ENCODE measurements at regions of chr9 and their contacts with region 1.

Region 1: GRCh38 chr9:94014065-94014654 is 59.0 kb upstream of the BARX1 start:
- DNase-seq: no peak
- H3K4me3 ChIP-seq: no peak overlapping the region
- CTCF ChIP-seq: peak; percentile 46

Region 2: DNA sequence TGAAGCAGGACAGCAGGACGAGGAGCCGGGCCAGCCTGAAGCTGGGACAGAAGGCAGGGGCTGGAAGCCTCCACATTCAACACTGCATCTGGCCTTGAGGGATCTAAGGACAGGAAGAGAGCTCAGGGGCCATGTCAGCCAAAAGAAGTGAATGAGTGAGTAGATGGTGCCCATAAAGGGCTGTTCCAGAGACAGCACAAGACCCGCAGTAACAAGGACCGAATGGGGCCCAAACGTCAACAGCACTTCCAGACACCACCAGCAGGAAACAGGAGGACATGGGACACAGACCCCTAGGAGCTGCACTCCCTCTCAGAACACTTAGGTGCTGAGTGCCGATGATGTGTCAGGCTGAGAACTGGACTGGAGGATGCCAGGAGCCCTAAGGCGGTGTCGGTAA is 677.5 kb before region 1 on chr9:
- CTCF ChIA-PET with region 1: no interaction called
- POLR2A ChIA-PET with region 1: no interaction called
- DNase-seq: no peak
- H3K4me3 ChIP-seq: no peak overlapping the region
- CTCF ChIP-seq: no peak

Region 3: DNA sequence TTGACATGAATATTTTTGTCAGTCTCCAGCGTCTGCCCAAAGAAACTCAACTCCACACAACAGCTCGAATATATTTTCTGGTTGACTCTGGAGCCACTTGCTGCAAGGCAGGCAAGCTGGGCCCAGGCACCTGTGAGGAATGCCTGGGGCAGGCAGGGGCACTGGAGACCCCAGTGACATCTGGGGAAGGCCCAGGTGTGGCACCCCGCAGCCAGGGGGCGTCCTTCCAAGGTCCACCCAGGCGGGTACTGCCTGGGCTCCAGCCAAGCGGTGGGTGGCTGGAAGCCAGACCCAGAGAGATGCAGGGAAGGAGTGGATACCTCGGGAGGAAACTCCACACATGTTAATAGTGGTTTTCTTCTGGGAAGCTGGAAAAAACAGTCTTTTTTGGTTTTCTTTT is 311.9 kb before region 1 on chr9:
- CTCF ChIA-PET with region 1: no interaction called
- POLR2A ChIA-PET with region 1: no interaction called
- DNase-seq: no peak
- H3K4me3 ChIP-seq: no peak overlapping the region
- CTCF ChIP-seq: no peak

Region 4: GRCh38 chr9:94002316-94003140 is 11.6 kb before region 1 on chr9:
- CTCF ChIA-PET with region 1: interaction called, 79 read pairs
- POLR2A ChIA-PET with region 1: no interaction called
- DNase-seq: no peak
- H3K4me3 ChIP-seq: no peak overlapping the region
- CTCF ChIP-seq: peak; percentile 68

Region 5: GRCh38 chr9:94030318-94031179 is 16.4 kb after region 1 on chr9:
- CTCF ChIA-PET with region 1: interaction called, 13 read pairs
- POLR2A ChIA-PET with region 1: no interaction called
- DNase-seq: peak; percentile 14
- H3K4me3 ChIP-seq: peak overlapping the region; percentile 78
- CTCF ChIP-seq: no peak

Region 6: DNA sequence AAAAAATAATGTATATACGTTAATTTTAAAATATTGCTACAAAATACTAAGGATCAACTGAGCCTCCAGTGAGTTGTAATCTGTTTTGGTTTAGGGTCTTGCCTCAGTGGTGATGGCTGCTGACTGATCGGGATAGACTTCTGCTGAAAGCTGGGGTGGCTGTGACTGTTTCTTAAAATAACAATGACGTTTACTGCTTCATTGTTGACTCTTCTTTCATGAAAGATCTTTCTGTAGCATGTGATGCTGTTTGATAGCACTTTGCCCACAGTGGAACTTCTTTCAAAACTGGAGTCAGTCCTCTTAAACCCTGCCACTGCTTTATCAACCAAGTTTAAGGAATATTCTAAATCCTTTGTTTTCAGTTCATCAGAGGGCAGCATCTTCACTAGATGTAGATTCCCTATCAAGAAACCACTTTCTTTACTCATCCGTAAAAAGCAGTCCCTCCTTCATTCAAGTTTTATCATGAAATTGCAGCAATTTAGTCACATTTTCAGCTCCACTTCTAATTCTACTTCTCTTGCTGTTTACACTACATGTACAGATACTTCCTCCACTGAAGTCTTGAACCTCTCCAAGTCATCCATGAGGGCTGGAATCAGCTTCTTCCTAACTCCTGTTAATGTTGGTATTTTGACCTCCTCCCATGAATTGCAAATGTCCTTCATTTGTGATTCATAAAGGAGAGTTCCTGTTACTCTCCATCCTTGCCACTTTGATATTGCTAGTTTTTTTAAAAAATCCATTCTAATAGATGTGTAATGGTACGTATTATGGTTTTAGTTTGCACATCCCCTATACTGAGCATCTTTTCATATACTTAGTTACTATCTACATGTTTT is 28.6 kb after region 1 on chr9:
- CTCF ChIA-PET with region 1: interaction called, 13 read pairs
- POLR2A ChIA-PET with region 1: no interaction called
- DNase-seq: no peak
- H3K4me3 ChIP-seq: no peak overlapping the region
- CTCF ChIP-seq: no peak

Region 7: GRCh38 chr9:94065535-94065961 is 51.4 kb after region 1 on chr9:
- CTCF ChIA-PET with region 1: interaction called, 46 read pairs
- POLR2A ChIA-PET with region 1: no interaction called
- DNase-seq: no peak
- H3K4me3 ChIP-seq: no peak overlapping the region
- CTCF ChIP-seq: peak; percentile 78

Region 8: DNA sequence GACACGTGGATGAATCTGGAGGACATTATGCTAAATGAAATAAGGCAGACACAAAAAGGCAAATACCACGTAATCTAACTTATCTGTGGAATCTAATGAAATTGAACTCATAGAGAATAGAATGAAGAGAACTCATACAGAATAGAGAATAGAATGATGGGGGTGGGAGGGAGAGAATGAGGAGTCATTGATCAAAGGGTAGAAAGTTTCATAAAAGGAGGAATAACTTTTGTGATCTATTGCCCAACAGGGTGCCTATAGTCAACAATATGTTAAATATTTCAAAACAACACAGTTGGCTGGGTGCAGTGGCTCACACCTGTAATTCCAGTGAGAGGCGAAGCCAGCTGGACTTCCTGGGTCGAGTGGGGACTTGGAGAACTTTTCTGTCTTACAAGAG is 190.0 kb after region 1 on chr9:
- CTCF ChIA-PET with region 1: interaction called, 319 read pairs
- POLR2A ChIA-PET with region 1: no interaction called
- DNase-seq: no peak
- H3K4me3 ChIP-seq: no peak overlapping the region
- CTCF ChIP-seq: no peak